Activated CD4-positive, alpha-beta T cell treated with anti-CD3 and anti-CD28 coated beads for 36 hours (primary cell): ENCODE measurements at regions of chr4 and their contacts with region 1.

Region 1: DNA sequence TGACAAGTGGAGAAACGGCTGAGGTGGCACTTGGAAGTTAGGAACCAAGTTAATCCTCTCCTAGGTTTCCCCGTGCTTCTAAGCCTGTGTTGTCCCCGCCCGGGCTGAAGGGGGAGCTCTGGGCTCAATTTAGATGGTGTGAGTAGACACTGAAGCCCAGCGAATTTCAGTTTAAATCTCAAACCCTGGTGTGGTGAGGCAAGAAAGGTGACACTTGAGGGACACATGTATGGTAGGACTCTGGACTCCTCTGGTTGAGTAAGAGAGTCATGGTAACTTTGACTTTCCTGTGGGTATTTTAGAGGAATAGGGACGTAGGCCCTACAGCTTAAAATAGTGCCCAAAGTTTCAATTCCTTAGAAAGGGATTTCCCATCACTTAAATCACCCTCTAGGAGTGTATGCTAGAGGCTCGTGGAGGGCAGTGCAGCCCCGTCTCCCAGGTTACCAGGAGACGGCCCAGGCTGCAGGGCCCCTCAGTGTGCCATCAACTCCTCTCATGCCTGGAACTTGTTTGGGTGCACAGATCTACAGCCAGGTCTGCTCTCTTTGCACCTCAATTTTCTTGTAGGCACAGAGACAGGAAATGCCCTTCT is 24.0 kb downstream of the HAND2 start:
- DNase-seq: peak; percentile 77
- ATAC-seq: peak; percentile 75
- H3K4me3 Mint-ChIP-seq: peak overlapping the region; percentile 4
- H3K27ac Mint-ChIP-seq: no peak overlapping the region
- H3K4me1 Mint-ChIP-seq: peaks cover 35% of the 10 kb centered on the region
- H3K27me3 Mint-ChIP-seq: peaks cover 81% of the 10 kb centered on the region

Region 2: GRCh38 chr4:173301518-173302201 is 204.4 kb before region 1 on chr4:
- CTCF ChIA-PET with region 1: no interaction called
- POLR2A ChIA-PET with region 1: no interaction called
- intact Hi-C with region 1: no loop called
- DNase-seq: peak; percentile 31
- ATAC-seq: peak; percentile 81
- H3K4me3 Mint-ChIP-seq: no peak overlapping the region
- H3K27ac Mint-ChIP-seq: no peak overlapping the region
- H3K4me1 Mint-ChIP-seq: peaks cover 2% of the 10 kb centered on the region
- H3K27me3 Mint-ChIP-seq: no peaks in the 10 kb centered on the region

Region 3: GRCh38 chr4:173752610-173753230 is 246.7 kb after region 1 on chr4:
- CTCF ChIA-PET with region 1: interaction called, 3 read pairs
- POLR2A ChIA-PET with region 1: no interaction called
- intact Hi-C with region 1: loop called (anchors 1 to 5 kb)
- DNase-seq: peak; percentile 60
- ATAC-seq: no peak
- H3K4me3 Mint-ChIP-seq: no peak overlapping the region
- H3K27ac Mint-ChIP-seq: no peak overlapping the region
- H3K4me1 Mint-ChIP-seq: no peaks in the 10 kb centered on the region
- H3K27me3 Mint-ChIP-seq: no peaks in the 10 kb centered on the region

Region 4: GRCh38 chr4:173990126-173990868 is 484.3 kb after region 1 on chr4:
- CTCF ChIA-PET with region 1: no interaction called
- POLR2A ChIA-PET with region 1: no interaction called
- intact Hi-C with region 1: loop called in 1 of 2 experiments (anchors 5 kb)
- DNase-seq: no peak
- ATAC-seq: no peak
- H3K4me3 Mint-ChIP-seq: no peak overlapping the region
- H3K27ac Mint-ChIP-seq: no peak overlapping the region
- H3K4me1 Mint-ChIP-seq: no peaks in the 10 kb centered on the region
- H3K27me3 Mint-ChIP-seq: peaks cover 2% of the 10 kb centered on the region

Region 5: GRCh38 chr4:174156239-174156826 is 650.3 kb after region 1 on chr4:
- CTCF ChIA-PET with region 1: interaction called, 4 read pairs
- POLR2A ChIA-PET with region 1: no interaction called
- intact Hi-C with region 1: loop called (anchors 1 to 10 kb)
- DNase-seq: no peak
- ATAC-seq: peak; percentile 68
- H3K4me3 Mint-ChIP-seq: no peak overlapping the region
- H3K27ac Mint-ChIP-seq: no peak overlapping the region
- H3K4me1 Mint-ChIP-seq: no peaks in the 10 kb centered on the region
- H3K27me3 Mint-ChIP-seq: peaks cover 22% of the 10 kb centered on the region

Region 6: GRCh38 chr4:174318829-174319764 is 813.1 kb after region 1 on chr4:
- CTCF ChIA-PET with region 1: no interaction called
- POLR2A ChIA-PET with region 1: no interaction called
- intact Hi-C with region 1: loop called in 1 of 2 experiments (anchors 1 kb)
- DNase-seq: no peak
- ATAC-seq: no peak
- H3K4me3 Mint-ChIP-seq: no peak overlapping the region
- H3K27ac Mint-ChIP-seq: no peak overlapping the region
- H3K4me1 Mint-ChIP-seq: no peaks in the 10 kb centered on the region
- H3K27me3 Mint-ChIP-seq: no peaks in the 10 kb centered on the region